GM12878 (cell line): ENCODE measurements at regions of chr1 and their contacts with region 1.

Region 1: GRCh38 chr1:102970498-102971078 is 137.7 kb downstream of the COL11A1 start:
- DNase-seq: no peak
- ATAC-seq: peak; percentile 61
- H3K4me3 ChIP-seq: no peak overlapping the region
- H3K27ac ChIP-seq: no peak overlapping the region
- H3K4me1 ChIP-seq: no peaks in the 10 kb centered on the region
- H3K27me3 ChIP-seq: no peaks in the 10 kb centered on the region
- CTCF ChIP-seq: peak; percentile 50 to 56 (median 52)
- EP300 ChIP-seq: no peak
- POLR2A ChIP-seq: no peak
- RAD21 ChIP-seq: peak; percentile 68

Region 2: GRCh38 chr1:102550729-102551384 is 419.7 kb before region 1 on chr1:
- CTCF ChIA-PET with region 1: interaction called, 11 read pairs
- POLR2A ChIA-PET with region 1: no interaction called
- RAD21 ChIA-PET with region 1: interaction called, 5 read pairs
- SMC1A ChIA-PET with region 1: interaction called, 3 read pairs
- in situ Hi-C with region 1: no loop called
- intact Hi-C with region 1: loop called (anchors 2 kb)
- DNase-seq: no peak
- ATAC-seq: peak; percentile 74
- H3K4me3 ChIP-seq: no peak overlapping the region
- H3K27ac ChIP-seq: no peak overlapping the region
- H3K4me1 ChIP-seq: no peaks in the 10 kb centered on the region
- H3K27me3 ChIP-seq: no peaks in the 10 kb centered on the region
- CTCF ChIP-seq: peak; percentile 29 to 48 (median 41); a peak in 5 of 6 replicates
- EP300 ChIP-seq: no peak
- POLR2A ChIP-seq: no peak
- RAD21 ChIP-seq: peak; percentile 24; the same call in 1 of the 2 replicates

Region 3: GRCh38 chr1:103084181-103084580 is 113.6 kb after region 1 on chr1:
- CTCF ChIA-PET with region 1: no interaction called
- POLR2A ChIA-PET with region 1: no interaction called
- RAD21 ChIA-PET with region 1: no interaction called
- SMC1A ChIA-PET with region 1: no interaction called
- in situ Hi-C with region 1: no loop called
- intact Hi-C with region 1: no loop called
- DNase-seq: no peak
- ATAC-seq: no peak
- H3K4me3 ChIP-seq: no peak overlapping the region
- H3K27ac ChIP-seq: no peak overlapping the region
- H3K4me1 ChIP-seq: no peaks in the 10 kb centered on the region
- H3K27me3 ChIP-seq: no peaks in the 10 kb centered on the region
- CTCF ChIP-seq: no peak
- EP300 ChIP-seq: no peak
- POLR2A ChIP-seq: no peak
- RAD21 ChIP-seq: no peak